ENCODE measurements at regions of chr11 and their contacts with region 1.

Region 1: DNA sequence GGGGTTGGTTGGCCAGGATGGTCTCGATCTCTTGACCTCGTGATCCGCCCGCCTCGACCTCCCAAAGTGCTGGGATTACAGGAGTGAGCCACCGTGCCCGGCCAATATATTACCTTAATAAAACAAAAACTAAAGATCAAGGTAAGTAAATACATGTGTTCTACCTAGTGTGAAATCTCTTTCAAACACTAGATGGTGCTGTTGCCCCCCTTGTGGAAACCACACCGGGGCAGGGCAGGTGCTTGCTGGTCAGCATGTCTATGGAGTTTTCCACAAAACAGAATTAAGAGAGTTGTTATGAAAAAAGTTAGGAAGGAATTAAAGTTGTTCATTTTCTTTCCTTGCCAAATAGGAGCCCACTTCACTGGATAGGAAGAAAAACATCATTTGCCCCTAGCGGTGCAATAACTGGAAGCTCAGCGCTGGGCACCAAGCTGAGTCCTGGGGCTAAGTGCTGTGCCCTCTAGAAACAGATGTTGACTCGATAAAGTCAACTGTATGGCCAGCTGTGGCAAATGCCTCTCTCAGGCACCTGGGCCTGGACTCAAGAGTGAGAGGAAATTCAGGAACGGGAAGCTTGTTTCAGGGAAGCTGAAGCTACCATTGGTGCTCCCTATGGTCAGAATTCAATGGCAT is 6.3 kb upstream of the KCNJ5 start:
- H3K4me3 ChIP-seq: no peak overlapping the region
- H3K27ac ChIP-seq: no peak overlapping the region
- H3K4me1 ChIP-seq: no peaks in the 10 kb centered on the region
- CTCF ChIP-seq: peak; percentile 39; the same call in 1 of the 2 replicates

Region 2: DNA sequence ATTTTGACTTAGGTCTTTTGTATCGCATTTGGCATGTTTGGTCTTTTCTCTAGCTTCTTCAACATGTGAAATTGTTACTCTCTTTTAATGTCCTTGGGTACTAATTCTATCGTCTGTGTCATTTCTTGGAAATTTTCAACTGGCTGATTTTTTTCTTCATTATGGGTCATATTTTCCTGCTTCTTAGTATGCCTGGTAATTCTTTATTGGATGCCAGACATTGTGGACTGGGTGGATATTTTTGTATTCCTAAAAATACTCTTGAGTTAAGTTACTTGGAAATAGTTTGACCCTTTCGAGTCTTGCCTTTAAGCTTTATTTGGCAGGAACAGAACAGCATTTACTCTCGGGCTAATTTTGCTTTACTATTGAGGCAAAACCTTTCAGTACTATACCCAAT is 437.6 kb before region 1 on chr11:
- CTCF ChIA-PET with region 1: no interaction called
- POLR2A ChIA-PET with region 1: no interaction called
- H3K4me3 ChIP-seq: no peak overlapping the region
- H3K27ac ChIP-seq: no peak overlapping the region
- H3K4me1 ChIP-seq: no peaks in the 10 kb centered on the region
- CTCF ChIP-seq: no peak

Region 3: GRCh38 chr11:128678024-128678423 is 206.8 kb before region 1 on chr11:
- CTCF ChIA-PET with region 1: no interaction called
- POLR2A ChIA-PET with region 1: no interaction called
- H3K4me3 ChIP-seq: no peak overlapping the region
- H3K27ac ChIP-seq: no peak overlapping the region
- H3K4me1 ChIP-seq: no peaks in the 10 kb centered on the region
- CTCF ChIP-seq: no peak

Region 4: GRCh38 chr11:128745311-128746136 is 139.3 kb before region 1 on chr11:
- CTCF ChIA-PET with region 1: no interaction called
- POLR2A ChIA-PET with region 1: no interaction called
- H3K4me3 ChIP-seq: no peak overlapping the region
- H3K27ac ChIP-seq: no peak overlapping the region
- H3K4me1 ChIP-seq: no peaks in the 10 kb centered on the region
- CTCF ChIP-seq: no peak

Region 5: DNA sequence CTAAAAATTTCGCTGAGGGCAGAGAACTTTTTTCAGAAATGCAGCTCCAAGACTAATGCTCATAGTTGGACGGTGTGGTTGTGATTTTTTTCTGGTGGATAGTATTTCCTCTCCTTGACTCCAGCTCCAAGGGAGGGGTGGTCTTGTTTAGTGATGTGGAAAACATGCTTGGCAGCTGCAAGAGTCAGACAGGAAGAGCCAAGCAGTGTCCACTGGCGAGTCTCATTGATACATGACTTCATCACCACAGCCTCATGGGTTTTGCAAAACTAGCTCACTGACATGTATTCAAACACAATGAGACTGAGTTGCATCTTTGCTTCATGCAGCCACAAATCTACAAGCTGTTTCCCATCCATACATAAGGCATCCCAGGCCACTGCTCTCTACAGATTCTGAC is 10.4 kb before region 1 on chr11:
- CTCF ChIA-PET with region 1: interaction called, 27 read pairs
- POLR2A ChIA-PET with region 1: no interaction called
- H3K4me3 ChIP-seq: no peak overlapping the region
- H3K27ac ChIP-seq: no peak overlapping the region
- H3K4me1 ChIP-seq: no peaks in the 10 kb centered on the region
- CTCF ChIP-seq: no peak

Region 6: DNA sequence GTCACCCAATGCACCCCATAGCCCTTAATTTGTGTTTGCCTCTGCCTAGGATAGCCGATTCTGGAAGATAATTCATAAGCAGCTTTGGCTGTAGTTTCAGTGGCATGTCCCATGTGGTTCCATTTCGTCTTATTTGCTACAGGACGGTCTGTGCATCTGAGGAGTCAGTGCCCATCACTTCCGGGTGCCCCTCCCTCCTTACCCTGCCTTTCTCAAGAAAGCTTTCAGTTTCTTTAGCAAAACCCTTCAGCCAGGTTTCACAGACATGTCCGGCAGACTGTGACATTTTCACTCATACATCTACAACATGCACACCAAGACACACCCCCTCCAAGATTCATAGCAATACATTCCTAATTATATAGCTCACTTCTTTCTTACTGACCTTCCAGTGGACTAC is 43.6 kb after region 1 on chr11:
- CTCF ChIA-PET with region 1: interaction called, 10 read pairs
- POLR2A ChIA-PET with region 1: interaction called, 3 read pairs
- H3K4me3 ChIP-seq: no peak overlapping the region
- H3K27ac ChIP-seq: no peak overlapping the region
- H3K4me1 ChIP-seq: no peaks in the 10 kb centered on the region
- CTCF ChIP-seq: no peak

Region 7: DNA sequence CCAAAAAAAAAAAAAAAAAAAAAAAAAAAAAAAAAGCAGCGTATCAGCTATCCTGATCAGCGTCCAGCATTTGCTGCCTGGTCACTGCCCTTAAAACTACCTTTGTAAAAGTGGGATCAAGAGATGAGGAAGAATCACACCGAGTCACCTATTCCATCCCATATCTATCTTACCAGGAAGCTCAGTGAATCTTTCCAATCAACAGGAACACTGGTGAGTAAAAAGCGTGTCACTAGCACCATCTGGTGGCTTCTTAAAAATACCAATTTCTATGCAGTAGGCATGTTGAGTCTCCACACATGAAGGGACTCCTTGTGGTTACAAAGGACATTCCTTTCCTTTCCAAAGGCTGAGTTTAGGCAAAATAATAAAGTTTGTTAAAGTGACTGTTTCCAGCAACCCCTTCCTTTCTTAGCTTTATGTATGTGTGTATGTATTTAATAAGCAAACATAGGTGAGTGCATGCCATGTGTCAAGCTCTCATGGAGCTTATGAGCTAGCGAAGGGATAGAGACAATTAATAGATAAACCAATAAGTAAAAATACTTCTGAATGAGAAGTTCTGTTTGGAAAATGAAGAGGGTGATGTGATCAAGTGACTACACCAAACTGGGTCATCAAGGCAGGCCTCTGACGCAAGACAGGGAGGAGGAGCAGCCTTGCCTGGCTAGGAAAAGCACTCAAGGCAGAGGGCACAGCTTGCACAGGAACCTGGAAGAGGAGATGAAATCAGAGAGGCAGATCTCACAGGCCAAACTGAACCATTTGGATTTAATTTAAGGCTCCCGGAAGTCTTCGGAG is 71.8 kb after region 1 on chr11:
- CTCF ChIA-PET with region 1: interaction called, 556 read pairs
- POLR2A ChIA-PET with region 1: interaction called, 14 read pairs
- H3K4me3 ChIP-seq: no peak overlapping the region
- H3K27ac ChIP-seq: no peak overlapping the region
- H3K4me1 ChIP-seq: no peaks in the 10 kb centered on the region
- CTCF ChIP-seq: peak; percentile 52; the same call in 1 of the 2 replicates

Region 8: DNA sequence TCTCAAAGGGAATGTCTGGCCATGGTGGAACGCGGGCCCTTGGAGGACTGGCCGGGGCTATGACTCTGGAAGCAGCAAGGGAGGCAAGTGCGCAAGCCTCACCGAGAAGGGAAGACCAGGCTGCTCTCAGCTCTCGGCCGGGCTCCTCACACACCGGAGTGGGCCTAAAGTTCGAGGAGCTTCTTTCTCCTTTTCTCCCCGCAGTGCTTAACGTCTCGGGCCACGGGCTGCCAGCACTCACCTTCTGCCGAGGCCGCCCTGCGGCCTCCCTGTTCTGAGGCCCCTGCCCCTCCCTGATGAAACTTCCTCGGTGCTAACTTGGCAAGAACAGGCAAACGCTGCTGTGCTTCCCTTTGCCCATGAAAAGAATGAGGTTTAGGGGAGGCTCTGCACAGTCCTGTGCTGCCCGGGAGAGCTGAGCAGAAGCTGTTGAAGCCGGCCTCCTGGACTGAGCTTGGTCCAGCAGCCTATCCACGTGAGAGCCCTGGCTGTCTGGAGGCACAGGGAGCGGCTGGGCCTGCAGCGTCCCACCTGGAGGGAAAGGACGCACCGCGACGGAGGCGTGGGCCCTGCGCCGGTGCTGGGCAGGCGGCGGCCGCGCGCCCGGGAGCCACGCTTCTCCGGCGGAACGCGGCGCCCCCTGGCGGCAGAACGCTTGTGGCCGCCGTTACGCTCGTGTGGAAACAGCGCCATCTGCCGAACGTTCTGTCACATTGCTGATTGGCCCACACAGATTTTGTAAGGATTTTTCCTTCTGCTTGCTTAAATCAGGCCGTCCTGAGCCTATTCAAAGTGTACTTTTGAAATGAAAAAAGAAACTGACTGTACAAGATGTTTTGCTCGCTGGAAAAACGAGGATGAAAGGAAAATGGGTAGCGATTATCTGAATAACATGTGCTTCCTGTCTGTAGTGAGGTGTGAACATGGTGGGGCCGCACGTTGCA is 865.8 kb after region 1 on chr11:
- CTCF ChIA-PET with region 1: interaction called, 12 read pairs
- POLR2A ChIA-PET with region 1: no interaction called
- H3K4me3 ChIP-seq: no peak overlapping the region
- H3K27ac ChIP-seq: no peak overlapping the region
- H3K4me1 ChIP-seq: no peaks in the 10 kb centered on the region
- CTCF ChIP-seq: peak; percentile 42; the same call in 1 of the 2 replicates